Transverse colon (tissue), 4 donors: ENCODE measurements at regions of chr21 and their contacts with region 1.

Region 1: GRCh38 chr21:44880762-44881585 is 7.5 kb upstream of the PTTG1IP start:
- DNase-seq: no peak
- H3K4me3 ChIP-seq: no peak overlapping the region
- H3K27ac ChIP-seq: peak overlapping the region; percentile 30 to 42 (median 37)
- H3K4me1 ChIP-seq: peaks cover 0 to 31% (median 4%) of the 10 kb centered on the region in 4 donors
- H3K27me3 ChIP-seq: no peaks in the 10 kb centered on the region
- CTCF ChIP-seq: no peak
- EP300 ChIP-seq: no peak
- POLR2A ChIP-seq: no peak

Region 2: DNA sequence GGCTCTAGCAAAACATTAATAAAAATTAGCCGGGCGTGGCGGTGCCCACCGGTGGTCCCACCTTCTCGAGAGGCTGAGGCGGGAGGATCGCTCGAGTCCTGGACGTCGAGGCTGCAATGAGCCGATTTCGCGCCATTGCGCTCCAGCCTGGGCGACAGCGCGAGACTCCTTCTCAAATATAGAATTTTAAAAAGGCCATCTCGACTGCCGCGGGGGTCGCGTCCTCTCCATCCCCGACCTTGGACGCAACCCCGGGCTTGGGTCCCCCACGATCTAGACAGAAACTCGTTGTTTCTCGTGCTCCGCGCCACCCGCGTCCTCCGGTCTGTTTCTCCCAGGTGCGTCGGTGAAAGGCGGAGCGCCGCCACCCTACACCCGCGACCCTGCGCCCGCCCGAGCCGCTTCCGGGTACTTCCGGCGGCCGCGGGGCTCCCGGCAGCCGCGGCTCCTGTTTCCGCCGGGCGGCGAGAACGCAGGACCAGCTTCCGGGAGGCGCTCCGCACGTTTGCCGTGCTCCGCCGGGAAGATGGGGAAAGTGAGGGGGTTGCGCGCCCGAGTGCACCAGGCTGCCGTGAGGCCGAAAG is 58.6 kb after region 1 on chr21 and contains the start of gene SLX9:
- in situ Hi-C with region 1: loop called in 1 of 4 experiments (anchors 10 kb)
- intact Hi-C with region 1: no loop called
- DNase-seq: peak; percentile 83
- H3K4me3 ChIP-seq: peak within 1 kb of the TSS; percentile 87 to 100 (median 99)
- H3K27ac ChIP-seq: peak within 1 kb of the TSS; percentile 77 to 85 (median 80)
- H3K4me1 ChIP-seq: peaks cover 14 to 33% (median 22%) of the 10 kb centered on the region in 4 donors
- H3K27me3 ChIP-seq: peaks cover under 1% of the 10 kb centered on the region
- CTCF ChIP-seq: no peak
- EP300 ChIP-seq: no peak
- POLR2A ChIP-seq: peak; percentile 62
- total RNA-seq, gene SLX9: 8.1 to 46.0 (median 16.6) TPM

Region 3: GRCh38 chr21:44982558-44983244 is 101.7 kb after region 1 on chr21:
- in situ Hi-C with region 1: no loop called
- intact Hi-C with region 1: no loop called
- DNase-seq: no peak
- H3K4me3 ChIP-seq: no peak overlapping the region
- H3K27ac ChIP-seq: no peak overlapping the region
- H3K4me1 ChIP-seq: peaks cover 0 to 3% (median 0%) of the 10 kb centered on the region in 4 donors
- H3K27me3 ChIP-seq: no peaks in the 10 kb centered on the region
- CTCF ChIP-seq: no peak
- EP300 ChIP-seq: no peak
- POLR2A ChIP-seq: no peak

Region 4: GRCh38 chr21:45074048-45074817 is 193.3 kb after region 1 on chr21 and contains the start of gene ADARB1:
- in situ Hi-C with region 1: no loop called
- intact Hi-C with region 1: no loop called
- DNase-seq: peak; percentile 57
- H3K4me3 ChIP-seq: peak within 1 kb of the TSS; percentile 76 to 98 (median 95)
- H3K27ac ChIP-seq: peak within 1 kb of the TSS; percentile 88 to 95 (median 90)
- H3K4me1 ChIP-seq: peaks cover 3 to 34% (median 19%) of the 10 kb centered on the region in 4 donors
- H3K27me3 ChIP-seq: peaks cover 14% of the 10 kb centered on the region
- CTCF ChIP-seq: no peak
- EP300 ChIP-seq: no peak
- POLR2A ChIP-seq: no peak
- total RNA-seq, gene ADARB1: 6.8 to 32.2 (median 17.3) TPM